SK-N-SH (cell line): ENCODE measurements at regions of chr12 and their contacts with region 1.

Region 1: GRCh38 chr12:91355150-91356006 is 172.8 kb upstream of the DCN start:
- DNase-seq: peak; percentile 45
- H3K4me3 ChIP-seq: no peak overlapping the region
- H3K27ac ChIP-seq: no peak overlapping the region
- H3K4me1 ChIP-seq: no peaks in the 10 kb centered on the region
- H3K27me3 ChIP-seq: no peaks in the 10 kb centered on the region
- CTCF ChIP-seq: peak; percentile 94
- EP300 ChIP-seq: no peak
- RAD21 ChIP-seq: peak; percentile 98

Region 2: GRCh38 chr12:90959538-90960139 is 395.7 kb before region 1 on chr12:
- CTCF ChIA-PET with region 1: interaction called, 11 read pairs
- POLR2A ChIA-PET with region 1: no interaction called
- DNase-seq: peak; percentile 43
- H3K4me3 ChIP-seq: no peak overlapping the region
- H3K27ac ChIP-seq: no peak overlapping the region
- H3K4me1 ChIP-seq: no peaks in the 10 kb centered on the region; a peak in 1 of 4 replicates
- H3K27me3 ChIP-seq: no peaks in the 10 kb centered on the region
- CTCF ChIP-seq: peak; percentile 77
- EP300 ChIP-seq: no peak
- RAD21 ChIP-seq: peak; percentile 77

Region 3: GRCh38 chr12:90978117-90978770 is 377.1 kb before region 1 on chr12:
- CTCF ChIA-PET with region 1: interaction called, 61 read pairs
- POLR2A ChIA-PET with region 1: no interaction called
- DNase-seq: peak; percentile 32
- H3K4me3 ChIP-seq: no peak overlapping the region; a peak in 1 of 4 replicates
- H3K27ac ChIP-seq: no peak overlapping the region
- H3K4me1 ChIP-seq: peaks cover 2 to 9% of the 10 kb centered on the region in 2 experiments; a peak in 3 of 4 replicates
- H3K27me3 ChIP-seq: no peaks in the 10 kb centered on the region
- CTCF ChIP-seq: peak; percentile 91
- EP300 ChIP-seq: no peak
- RAD21 ChIP-seq: peak; percentile 98

Region 4: GRCh38 chr12:91256411-91256810 is 99.0 kb before region 1 on chr12:
- CTCF ChIA-PET with region 1: no interaction called
- POLR2A ChIA-PET with region 1: no interaction called
- DNase-seq: no peak
- H3K4me3 ChIP-seq: no peak overlapping the region
- H3K27ac ChIP-seq: peak overlapping the region in 1 of 2 experiments; percentile 36; a peak in 2 of 4 replicates
- H3K4me1 ChIP-seq: peaks cover 0 to 10% of the 10 kb centered on the region in 2 experiments; a peak in 2 of 4 replicates
- H3K27me3 ChIP-seq: no peaks in the 10 kb centered on the region
- CTCF ChIP-seq: no peak
- EP300 ChIP-seq: no peak
- RAD21 ChIP-seq: no peak

Region 5: GRCh38 chr12:91326058-91327027 is 29.0 kb before region 1 on chr12:
- CTCF ChIA-PET with region 1: interaction called, 18 read pairs
- POLR2A ChIA-PET with region 1: no interaction called
- DNase-seq: peak; percentile 26
- H3K4me3 ChIP-seq: peak overlapping the region in 1 of 2 experiments; percentile 45; a peak in 1 of 4 replicates
- H3K27ac ChIP-seq: peak overlapping the region; percentile 70 to 91; a peak in 3 of 4 replicates
- H3K4me1 ChIP-seq: no peaks in the 10 kb centered on the region; a peak in 1 of 4 replicates
- H3K27me3 ChIP-seq: no peaks in the 10 kb centered on the region
- CTCF ChIP-seq: peak; percentile 86
- EP300 ChIP-seq: peak; percentile 71 to 76; a peak in 3 of 4 replicates
- RAD21 ChIP-seq: peak; percentile 80

Region 6: DNA sequence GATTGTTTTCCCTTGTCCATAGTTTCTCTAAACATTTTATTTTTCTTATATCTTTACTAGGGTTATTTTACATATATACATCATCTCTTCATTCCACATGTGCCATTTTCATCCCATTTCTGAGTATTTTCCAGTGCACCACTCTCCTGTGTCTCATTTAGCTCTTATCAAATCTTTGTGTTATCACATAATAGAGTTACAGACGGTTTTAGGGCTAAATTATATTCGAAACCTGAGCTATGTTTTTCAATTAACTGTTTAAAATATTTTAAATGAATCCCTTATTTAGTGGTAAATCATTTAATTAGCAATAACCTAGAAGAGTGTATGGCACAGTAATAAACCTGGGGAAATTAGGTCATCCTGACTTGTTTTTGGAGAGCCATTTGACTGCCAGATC is 12.4 kb before region 1 on chr12:
- CTCF ChIA-PET with region 1: interaction called, 21 read pairs
- POLR2A ChIA-PET with region 1: no interaction called
- DNase-seq: peak; percentile 4
- H3K4me3 ChIP-seq: no peak overlapping the region
- H3K27ac ChIP-seq: no peak overlapping the region
- H3K4me1 ChIP-seq: no peaks in the 10 kb centered on the region; a peak in 1 of 4 replicates
- H3K27me3 ChIP-seq: no peaks in the 10 kb centered on the region
- CTCF ChIP-seq: no peak
- EP300 ChIP-seq: peak in 1 of 2 experiments; percentile 66; a peak in 1 of 4 replicates
- RAD21 ChIP-seq: no peak